ENCODE measurements at regions of chr16 and their contacts with region 1.

Region 1: DNA sequence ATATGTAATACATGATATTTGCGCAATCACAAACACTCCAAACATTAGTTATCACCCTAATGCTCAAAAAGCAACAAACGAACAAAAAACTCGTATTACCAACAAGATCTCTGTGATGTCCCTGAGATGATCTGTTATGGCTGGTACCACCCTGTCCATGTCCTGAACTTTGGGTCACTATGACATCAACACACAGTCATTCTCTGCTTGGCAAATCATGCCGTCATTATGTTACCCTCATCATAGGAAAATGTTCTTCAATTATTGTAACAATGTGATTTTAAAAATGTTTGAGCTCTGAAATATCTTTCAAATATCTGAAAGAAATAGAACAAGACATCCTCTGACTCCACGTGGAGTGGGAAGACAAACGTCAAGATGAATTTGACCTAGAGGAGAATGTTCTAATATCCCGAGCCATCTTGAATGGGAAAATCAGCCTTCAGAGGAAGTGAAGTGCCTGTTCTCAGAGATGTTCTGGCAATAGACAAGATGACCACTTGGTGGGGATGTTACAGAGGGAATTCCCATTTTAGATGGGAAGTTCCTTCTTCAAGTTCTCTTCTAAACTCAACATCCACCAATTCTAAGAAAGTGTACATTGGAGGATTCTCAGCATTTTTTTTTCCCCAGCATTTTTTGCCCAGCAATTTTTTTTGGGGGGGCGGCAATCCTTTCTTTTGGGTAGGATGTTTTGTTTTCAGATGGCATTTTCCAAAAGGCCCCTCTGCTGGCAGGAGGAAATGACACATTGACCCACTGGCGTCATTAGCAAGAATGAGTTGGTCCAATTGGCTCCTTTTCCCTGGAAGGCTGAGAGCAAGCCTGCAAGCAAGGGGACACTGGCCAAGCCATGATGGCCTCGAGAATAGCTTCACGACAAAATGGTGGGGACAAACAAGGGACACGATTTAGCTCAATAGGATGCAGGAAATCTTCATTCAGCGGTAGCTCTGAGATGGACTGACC is 3.7 kb upstream of the HSD17B2 start:
- DNase-seq: peak in 1 of 3 donors; percentile 63
- ATAC-seq: peak; percentile 13
- H3K4me3 ChIP-seq: no peak overlapping the region
- H3K4me1 ChIP-seq: peaks cover 19% of the 10 kb centered on the region
- CTCF ChIP-seq: peak; percentile 34

Region 2: GRCh38 chr16:82229796-82230619 is 198.6 kb after region 1 on chr16:
- intact Hi-C with region 1: loop called (anchors 5 kb)
- DNase-seq: peak; percentile 49 to 83 (median 78)
- ATAC-seq: peak; percentile 92
- H3K4me3 ChIP-seq: no peak overlapping the region
- H3K4me1 ChIP-seq: peaks cover 8% of the 10 kb centered on the region
- CTCF ChIP-seq: peak; percentile 87